ENCODE measurements at regions of chr11 and their contacts with region 1.

Region 1: GRCh38 chr11:48307760-48308386 is 1.9 kb downstream of the OR4S1 start:
- DNase-seq: peak; percentile 15 to 56
- ATAC-seq: peak in 5 of 8 donors; percentile 29 to 73 (median 60)
- H3K4me3 ChIP-seq: no peak overlapping the region
- H3K27ac ChIP-seq: no peak overlapping the region
- H3K4me1 ChIP-seq: no peaks in the 10 kb centered on the region
- H3K27me3 ChIP-seq: no peaks in the 10 kb centered on the region
- CTCF ChIP-seq: peak; percentile 54 to 88 (median 79)

Region 2: DNA sequence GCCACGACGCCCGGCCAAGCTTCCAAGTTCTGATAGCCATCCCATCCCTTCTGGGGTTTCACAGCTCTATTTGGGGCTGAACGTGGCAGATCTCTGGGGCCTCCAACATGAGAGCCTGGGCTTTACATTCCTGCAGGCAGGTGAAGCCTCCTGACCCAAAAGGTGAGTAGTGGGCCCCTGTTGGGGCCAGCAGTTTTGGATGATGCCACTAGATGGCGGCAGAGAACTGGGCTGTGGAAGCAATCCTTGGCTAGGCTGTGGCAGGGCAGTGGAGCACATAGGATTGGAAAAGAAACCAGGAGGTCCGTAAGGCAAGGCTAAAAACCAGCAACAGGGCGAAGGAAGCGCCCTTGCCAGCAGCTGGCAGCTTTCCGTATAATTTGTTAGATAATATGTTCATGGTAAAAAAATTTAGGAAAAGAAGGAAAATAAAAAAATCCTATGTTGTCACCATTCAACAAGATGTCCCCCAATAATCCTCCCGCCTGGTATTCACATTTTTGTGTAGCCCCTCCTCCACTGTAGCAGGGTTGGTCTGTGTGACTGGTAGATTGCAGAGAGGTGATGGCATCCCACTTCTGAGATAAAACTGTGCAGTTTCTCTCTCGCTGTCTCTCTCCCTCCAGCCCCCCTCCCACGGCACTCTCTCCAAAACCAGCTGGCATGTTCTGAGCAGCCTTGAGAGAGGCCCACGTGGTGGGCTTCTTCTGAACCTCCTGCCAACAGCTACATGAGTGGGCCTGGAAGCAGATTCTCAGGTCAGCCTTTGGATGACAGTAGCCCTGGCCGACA is 134.9 kb before region 1 on chr11:
- intact Hi-C with region 1: loop called in 3 of 10 experiments (anchors 5 to 10 kb)
- DNase-seq: peak; percentile 60 to 67
- ATAC-seq: peak; percentile 46 to 77 (median 69)
- H3K4me3 ChIP-seq: peak overlapping the region in 1 of 10 donors; percentile 16
- H3K27ac ChIP-seq: peak overlapping the region in 8 of 10 donors; percentile 26 to 90 (median 66)
- H3K4me1 ChIP-seq: peaks cover 6 to 53% (median 36%) of the 10 kb centered on the region in 9 donors
- H3K27me3 ChIP-seq: no peaks in the 10 kb centered on the region
- CTCF ChIP-seq: peak; percentile 76 to 92 (median 87)

Measured in heart right ventricle (tissue), 16 donors.